ENCODE measurements at regions of chr4 and their contacts with region 1.

Region 1: GRCh38 chr4:75724066-75724866 is at the start of gene USO1:
- DNase-seq: peak; percentile 97 to 100 (median 99)
- ATAC-seq: peak; percentile 90 to 97 (median 94)
- H3K4me3 ChIP-seq: peak within 1 kb of the TSS; percentile 99 to 100
- H3K4me3 Mint-ChIP-seq: peak within 1 kb of the TSS; percentile 99 to 100 (median 99)
- H3K27ac ChIP-seq: peak within 1 kb of the TSS; percentile 94
- H3K27ac Mint-ChIP-seq: peak within 1 kb of the TSS; percentile 95 to 99
- H3K4me1 ChIP-seq: peaks cover 14 to 25% of the 10 kb centered on the region in 2 experiments
- H3K4me1 Mint-ChIP-seq: peaks cover 61 to 63% (median 62%) of the 10 kb centered on the region in 3 donors
- H3K27me3 ChIP-seq: no peaks in the 10 kb centered on the region
- H3K27me3 Mint-ChIP-seq: no peaks in the 10 kb centered on the region
- total RNA-seq, gene USO1: 24.9 to 40.5 (median 34.6) TPM

Region 2: GRCh38 chr4:74640111-74640903 is 1084.0 kb before region 1 on chr4:
- CTCF ChIA-PET with region 1: no interaction called
- POLR2A ChIA-PET with region 1: no interaction called
- DNase-seq: no peak
- ATAC-seq: no peak
- H3K4me3 ChIP-seq: no peak overlapping the region
- H3K4me3 Mint-ChIP-seq: no peak overlapping the region
- H3K27ac ChIP-seq: no peak overlapping the region
- H3K27ac Mint-ChIP-seq: no peak overlapping the region
- H3K4me1 ChIP-seq: no peaks in the 10 kb centered on the region
- H3K4me1 Mint-ChIP-seq: no peaks in the 10 kb centered on the region
- H3K27me3 ChIP-seq: no peaks in the 10 kb centered on the region
- H3K27me3 Mint-ChIP-seq: peaks cover 3 to 11% of the 10 kb centered on the region in 2 donors

Region 3: GRCh38 chr4:75514131-75514948 is 209.9 kb before region 1 on chr4 and contains the starts of genes RCHY1 and THAP6:
- CTCF ChIA-PET with region 1: interaction called in 1 of 2 experiments, 21 read pairs
- POLR2A ChIA-PET with region 1: interaction called, 5 to 19 read pairs
- DNase-seq: peak; percentile 81 to 97 (median 92)
- ATAC-seq: peak; percentile 89 to 91 (median 90)
- H3K4me3 ChIP-seq: peak within 1 kb of the TSS; percentile 77 to 96
- H3K4me3 Mint-ChIP-seq: no peak within 1 kb of the TSS
- H3K27ac ChIP-seq: peak within 1 kb of the TSS; percentile 97
- H3K27ac Mint-ChIP-seq: peak within 1 kb of the TSS; percentile 96
- H3K4me1 ChIP-seq: peaks cover 30 to 40% of the 10 kb centered on the region in 2 experiments
- H3K4me1 Mint-ChIP-seq: peaks cover 38 to 59% (median 56%) of the 10 kb centered on the region in 3 donors
- H3K27me3 ChIP-seq: no peaks in the 10 kb centered on the region
- H3K27me3 Mint-ChIP-seq: no peaks in the 10 kb centered on the region
- total RNA-seq, gene RCHY1: 28.3 to 33.8 (median 30.3) TPM
- total RNA-seq, gene THAP6: 24.4 to 35.5 (median 29.6) TPM

Region 4: DNA sequence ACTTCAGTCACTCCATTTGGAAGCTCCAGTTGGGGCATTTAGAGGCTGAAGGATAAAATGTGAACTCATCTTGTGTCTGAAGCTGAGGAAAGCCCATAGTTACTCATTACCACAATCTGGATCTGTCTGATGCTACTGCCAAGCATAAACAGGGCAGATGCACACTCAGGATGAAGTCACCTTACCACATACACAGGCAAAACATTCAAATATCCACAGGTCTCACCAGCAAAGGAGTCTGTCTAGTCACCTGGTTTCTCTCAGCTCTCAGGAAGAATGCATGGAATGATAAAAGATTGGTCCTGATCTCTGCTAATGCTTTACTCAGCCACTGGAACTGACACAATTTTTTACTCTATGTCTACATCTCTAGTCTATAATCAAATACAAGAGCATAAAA is 181.4 kb before region 1 on chr4:
- CTCF ChIA-PET with region 1: no interaction called
- POLR2A ChIA-PET with region 1: no interaction called
- DNase-seq: no peak
- ATAC-seq: no peak
- H3K4me3 ChIP-seq: no peak overlapping the region
- H3K4me3 Mint-ChIP-seq: no peak overlapping the region
- H3K27ac ChIP-seq: no peak overlapping the region
- H3K27ac Mint-ChIP-seq: no peak overlapping the region
- H3K4me1 ChIP-seq: no peaks in the 10 kb centered on the region
- H3K4me1 Mint-ChIP-seq: no peaks in the 10 kb centered on the region
- H3K27me3 ChIP-seq: no peaks in the 10 kb centered on the region
- H3K27me3 Mint-ChIP-seq: no peaks in the 10 kb centered on the region

Region 5: GRCh38 chr4:75653845-75654503 is 70.3 kb before region 1 on chr4:
- CTCF ChIA-PET with region 1: interaction called, 6 to 26 read pairs
- POLR2A ChIA-PET with region 1: interaction called, 10 to 11 read pairs
- DNase-seq: peak in 1 of 35 experiments; percentile 36
- ATAC-seq: no peak
- H3K4me3 ChIP-seq: no peak overlapping the region
- H3K4me3 Mint-ChIP-seq: peak overlapping the region in 2 of 3 donors; percentile 15 to 35
- H3K27ac ChIP-seq: peak overlapping the region; percentile 79
- H3K27ac Mint-ChIP-seq: peak overlapping the region; percentile 73 to 81
- H3K4me1 ChIP-seq: peaks cover 5 to 39% of the 10 kb centered on the region in 2 experiments
- H3K4me1 Mint-ChIP-seq: peaks cover 51 to 64% (median 53%) of the 10 kb centered on the region in 3 donors
- H3K27me3 ChIP-seq: no peaks in the 10 kb centered on the region
- H3K27me3 Mint-ChIP-seq: no peaks in the 10 kb centered on the region

Region 6: GRCh38 chr4:75673027-75673958 is 51.0 kb before region 1 on chr4 and contains the start of gene G3BP2:
- CTCF ChIA-PET with region 1: interaction called, 10 to 20 read pairs
- POLR2A ChIA-PET with region 1: interaction called, 4 to 25 read pairs
- DNase-seq: peak; percentile 91 to 99 (median 98)
- ATAC-seq: peak; percentile 93 to 95 (median 93)
- H3K4me3 ChIP-seq: peak within 1 kb of the TSS; percentile 96 to 98
- H3K4me3 Mint-ChIP-seq: peak within 1 kb of the TSS; percentile 98 to 100 (median 99)
- H3K27ac ChIP-seq: peak within 1 kb of the TSS; percentile 98
- H3K27ac Mint-ChIP-seq: peak within 1 kb of the TSS; percentile 98 to 99
- H3K4me1 ChIP-seq: peaks cover 14 to 39% of the 10 kb centered on the region in 2 experiments
- H3K4me1 Mint-ChIP-seq: peaks cover 44 to 46% (median 46%) of the 10 kb centered on the region in 3 donors
- H3K27me3 ChIP-seq: peaks cover 0 to 4% of the 10 kb centered on the region in 2 experiments
- H3K27me3 Mint-ChIP-seq: no peaks in the 10 kb centered on the region
- total RNA-seq, gene G3BP2: 135 to 316 (median 141) TPM

Region 7: DNA sequence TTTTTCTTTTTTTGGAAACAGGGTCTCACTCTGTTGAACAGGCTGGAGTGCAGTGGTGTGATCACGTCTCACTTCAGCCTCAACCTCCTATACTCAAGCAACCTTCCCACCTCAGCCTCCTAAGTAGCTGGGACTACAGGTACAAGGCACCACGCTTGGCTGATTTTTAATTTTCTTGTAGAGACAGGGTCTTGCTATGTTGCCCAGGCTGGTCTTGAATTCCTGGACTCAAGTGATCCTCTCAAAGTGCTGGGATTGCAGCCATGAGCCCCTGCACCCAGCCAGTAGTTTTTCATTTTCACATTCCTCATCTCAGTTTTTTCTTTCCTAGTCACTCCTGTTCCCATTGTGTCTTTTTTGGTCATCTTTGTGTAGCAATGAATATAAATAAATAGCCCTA is 11.3 kb after region 1 on chr4:
- CTCF ChIA-PET with region 1: interaction called, 4 to 11 read pairs
- POLR2A ChIA-PET with region 1: interaction called in 1 of 2 experiments, 5 read pairs
- DNase-seq: no peak
- ATAC-seq: no peak
- H3K4me3 ChIP-seq: no peak overlapping the region
- H3K4me3 Mint-ChIP-seq: no peak overlapping the region
- H3K27ac ChIP-seq: no peak overlapping the region
- H3K27ac Mint-ChIP-seq: no peak overlapping the region
- H3K4me1 ChIP-seq: no peaks in the 10 kb centered on the region
- H3K4me1 Mint-ChIP-seq: peaks cover 27 to 36% (median 36%) of the 10 kb centered on the region in 3 donors
- H3K27me3 ChIP-seq: no peaks in the 10 kb centered on the region
- H3K27me3 Mint-ChIP-seq: no peaks in the 10 kb centered on the region

Region 8: DNA sequence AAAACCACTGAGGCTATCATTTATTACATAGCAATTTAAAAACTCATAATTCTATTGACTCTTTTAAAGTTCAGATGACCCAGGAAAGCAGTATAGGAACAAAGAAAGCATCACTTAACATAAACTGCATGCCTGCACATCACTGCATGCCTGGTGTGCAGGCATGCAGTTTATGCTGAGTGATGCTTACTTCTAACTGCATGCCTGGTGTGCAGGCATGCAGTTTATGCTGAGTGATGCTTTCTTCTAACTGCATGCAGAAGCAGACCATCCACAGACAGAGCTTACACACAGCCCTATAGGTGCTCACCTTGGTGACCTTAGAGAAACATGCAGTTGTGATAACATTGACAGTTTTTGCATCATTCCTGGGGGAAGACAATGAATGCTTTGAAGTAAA is 249.5 kb after region 1 on chr4:
- CTCF ChIA-PET with region 1: no interaction called
- POLR2A ChIA-PET with region 1: no interaction called
- DNase-seq: no peak
- ATAC-seq: no peak
- H3K4me3 ChIP-seq: no peak overlapping the region
- H3K4me3 Mint-ChIP-seq: no peak overlapping the region
- H3K27ac ChIP-seq: no peak overlapping the region
- H3K27ac Mint-ChIP-seq: no peak overlapping the region
- H3K4me1 ChIP-seq: no peaks in the 10 kb centered on the region
- H3K4me1 Mint-ChIP-seq: no peaks in the 10 kb centered on the region
- H3K27me3 ChIP-seq: no peaks in the 10 kb centered on the region
- H3K27me3 Mint-ChIP-seq: no peaks in the 10 kb centered on the region